ENCODE measurements at regions of chr10 and their contacts with region 1.

Region 1: GRCh38 chr10:82721831-82722230 is 846.8 kb downstream of the NRG3 start:
- DNase-seq: no peak
- H3K4me3 ChIP-seq: no peak overlapping the region
- H3K4me3 Mint-ChIP-seq: no peak overlapping the region
- H3K27ac Mint-ChIP-seq: no peak overlapping the region
- H3K4me1 ChIP-seq: peaks cover 5% of the 10 kb centered on the region; the same call in 1 of the 2 replicates
- H3K4me1 Mint-ChIP-seq: peaks cover 10% of the 10 kb centered on the region
- H3K27me3 ChIP-seq: no peaks in the 10 kb centered on the region
- H3K27me3 Mint-ChIP-seq: no peaks in the 10 kb centered on the region
- CTCF ChIP-seq: no peak

Region 2: DNA sequence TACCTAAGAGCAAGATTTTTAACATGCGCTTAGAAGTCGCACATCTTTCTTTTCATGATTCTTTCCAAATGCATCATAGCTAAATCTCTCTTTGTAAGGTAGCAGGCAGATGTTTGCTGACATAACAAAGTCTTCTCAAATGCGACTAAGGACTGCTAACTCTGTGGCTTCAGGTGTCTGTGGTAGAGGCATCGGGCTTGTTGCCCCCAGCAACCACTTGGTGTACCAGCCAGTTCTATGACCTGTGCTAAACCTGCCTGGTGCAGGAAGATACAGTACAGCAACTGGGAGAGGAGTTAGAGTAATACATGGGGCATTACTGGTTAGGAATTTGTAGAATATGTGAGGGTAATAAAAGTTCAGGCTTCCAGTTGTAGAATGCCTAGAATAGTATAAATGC is 192.8 kb before region 1 on chr10:
- CTCF ChIA-PET with region 1: no interaction called
- POLR2A ChIA-PET with region 1: no interaction called
- intact Hi-C with region 1: loop called (anchors 5 kb)
- DNase-seq: no peak
- H3K4me3 ChIP-seq: no peak overlapping the region
- H3K4me3 Mint-ChIP-seq: no peak overlapping the region
- H3K27ac Mint-ChIP-seq: no peak overlapping the region
- H3K4me1 ChIP-seq: 0 out of 2 replicates have a peak, but pooled peaks cover 4% of the 10 kb centered on the region
- H3K4me1 Mint-ChIP-seq: peaks cover 15% of the 10 kb centered on the region
- H3K27me3 ChIP-seq: no peaks in the 10 kb centered on the region
- H3K27me3 Mint-ChIP-seq: no peaks in the 10 kb centered on the region
- CTCF ChIP-seq: no peak

Region 3: GRCh38 chr10:82680608-82681007 is 41.2 kb before region 1 on chr10:
- CTCF ChIA-PET with region 1: no interaction called
- POLR2A ChIA-PET with region 1: no interaction called
- intact Hi-C with region 1: loop called (anchors 2 kb)
- DNase-seq: no peak
- H3K4me3 ChIP-seq: no peak overlapping the region
- H3K4me3 Mint-ChIP-seq: no peak overlapping the region
- H3K27ac Mint-ChIP-seq: no peak overlapping the region
- H3K4me1 ChIP-seq: 0 out of 2 replicates have a peak, but pooled peaks cover 4% of the 10 kb centered on the region
- H3K4me1 Mint-ChIP-seq: peaks cover 13% of the 10 kb centered on the region
- H3K27me3 ChIP-seq: no peaks in the 10 kb centered on the region
- H3K27me3 Mint-ChIP-seq: no peaks in the 10 kb centered on the region
- CTCF ChIP-seq: no peak

Region 4: GRCh38 chr10:82742478-82742877 is 20.6 kb after region 1 on chr10:
- CTCF ChIA-PET with region 1: no interaction called
- POLR2A ChIA-PET with region 1: no interaction called
- intact Hi-C with region 1: no loop called
- DNase-seq: no peak
- H3K4me3 ChIP-seq: no peak overlapping the region
- H3K4me3 Mint-ChIP-seq: no peak overlapping the region
- H3K27ac Mint-ChIP-seq: no peak overlapping the region
- H3K4me1 ChIP-seq: peaks cover 8% of the 10 kb centered on the region; the same call in 1 of the 2 replicates
- H3K4me1 Mint-ChIP-seq: peaks cover 7% of the 10 kb centered on the region
- H3K27me3 ChIP-seq: no peaks in the 10 kb centered on the region
- H3K27me3 Mint-ChIP-seq: no peaks in the 10 kb centered on the region
- CTCF ChIP-seq: no peak

Measured in Caco-2 (cell line).